ENCODE measurements at regions of chr20 and their contacts with region 1.

Region 1: GRCh38 chr20:20083807-20084206 is 31.5 kb downstream of the CFAP61 start:
- DNase-seq: peak; percentile 19
- ATAC-seq: peak; percentile 81
- H3K4me3 ChIP-seq: no peak overlapping the region
- H3K27ac ChIP-seq: no peak overlapping the region
- H3K4me1 ChIP-seq: no peaks in the 10 kb centered on the region
- H3K27me3 ChIP-seq: peaks cover 11% of the 10 kb centered on the region; the same call in 1 of the 2 replicates
- CTCF ChIP-seq: peak; percentile 29 to 60 (median 46); a peak in 4 of 6 replicates
- POLR2A ChIP-seq: no peak
- RAD21 ChIP-seq: peak; percentile 71

Region 2: GRCh38 chr20:20237093-20237959 is 153.5 kb after region 1 on chr20:
- CTCF ChIA-PET with region 1: interaction called, 6 read pairs
- POLR2A ChIA-PET with region 1: no interaction called
- RAD21 ChIA-PET with region 1: no interaction called
- intact Hi-C with region 1: loop called (anchors 1 kb)
- DNase-seq: peak; percentile 28
- ATAC-seq: peak; percentile 96
- H3K4me3 ChIP-seq: no peak overlapping the region
- H3K27ac ChIP-seq: no peak overlapping the region
- H3K4me1 ChIP-seq: no peaks in the 10 kb centered on the region
- H3K27me3 ChIP-seq: no peaks in the 10 kb centered on the region
- CTCF ChIP-seq: peak; percentile 27 to 80 (median 77); a peak in 5 of 6 replicates
- POLR2A ChIP-seq: no peak
- RAD21 ChIP-seq: peak; percentile 54

Region 3: DNA sequence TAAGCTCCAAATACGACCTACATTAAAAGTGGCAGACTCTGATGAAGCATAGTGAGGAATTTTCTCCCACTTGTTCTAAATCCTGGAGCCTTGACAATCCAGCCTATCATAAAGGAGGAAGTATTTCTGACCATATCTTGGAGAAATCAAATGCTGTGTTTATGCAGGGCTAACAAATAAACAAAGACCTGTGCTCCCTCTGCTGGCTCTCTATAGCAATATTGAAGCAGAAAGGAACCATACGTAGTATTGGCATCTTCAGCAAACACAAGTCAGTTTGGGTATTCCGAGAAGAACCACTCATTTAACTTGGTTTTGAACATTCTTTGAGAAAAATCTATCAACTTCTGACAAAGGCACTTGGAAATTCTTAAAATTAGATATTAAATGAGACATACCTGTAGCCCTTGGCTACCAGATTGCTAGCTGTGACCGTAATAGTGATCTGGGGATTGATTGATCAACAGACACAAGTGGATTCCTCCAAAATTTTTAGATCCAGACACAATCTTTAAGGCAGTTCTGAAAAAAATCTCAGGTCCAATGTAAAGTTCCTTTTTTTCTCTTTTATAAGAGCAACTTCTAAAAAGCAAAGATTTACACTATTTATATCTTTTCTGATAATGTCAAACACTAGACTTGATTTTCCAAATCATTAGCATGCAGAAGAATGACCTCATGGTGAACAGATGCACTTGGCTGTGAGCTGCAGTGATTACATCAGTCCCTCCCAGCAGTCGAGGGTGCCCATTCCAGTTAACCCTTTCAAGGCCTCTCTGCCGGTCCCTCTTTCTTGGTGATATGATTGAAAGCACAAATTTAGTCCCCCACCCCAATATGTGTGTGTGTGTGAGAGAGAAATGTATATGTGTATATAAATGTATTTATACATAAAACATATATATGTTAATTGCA is 324.3 kb after region 1 on chr20:
- CTCF ChIA-PET with region 1: no interaction called
- POLR2A ChIA-PET with region 1: no interaction called
- RAD21 ChIA-PET with region 1: no interaction called
- intact Hi-C with region 1: loop called (anchors 2 kb)
- DNase-seq: peak; percentile 3
- ATAC-seq: no peak
- H3K4me3 ChIP-seq: no peak overlapping the region
- H3K27ac ChIP-seq: no peak overlapping the region
- H3K4me1 ChIP-seq: no peaks in the 10 kb centered on the region
- H3K27me3 ChIP-seq: no peaks in the 10 kb centered on the region
- CTCF ChIP-seq: peak in 2 of 3 experiments; percentile 33 to 46; a peak in 4 of 6 replicates
- POLR2A ChIP-seq: no peak
- RAD21 ChIP-seq: no peak

Region 4: DNA sequence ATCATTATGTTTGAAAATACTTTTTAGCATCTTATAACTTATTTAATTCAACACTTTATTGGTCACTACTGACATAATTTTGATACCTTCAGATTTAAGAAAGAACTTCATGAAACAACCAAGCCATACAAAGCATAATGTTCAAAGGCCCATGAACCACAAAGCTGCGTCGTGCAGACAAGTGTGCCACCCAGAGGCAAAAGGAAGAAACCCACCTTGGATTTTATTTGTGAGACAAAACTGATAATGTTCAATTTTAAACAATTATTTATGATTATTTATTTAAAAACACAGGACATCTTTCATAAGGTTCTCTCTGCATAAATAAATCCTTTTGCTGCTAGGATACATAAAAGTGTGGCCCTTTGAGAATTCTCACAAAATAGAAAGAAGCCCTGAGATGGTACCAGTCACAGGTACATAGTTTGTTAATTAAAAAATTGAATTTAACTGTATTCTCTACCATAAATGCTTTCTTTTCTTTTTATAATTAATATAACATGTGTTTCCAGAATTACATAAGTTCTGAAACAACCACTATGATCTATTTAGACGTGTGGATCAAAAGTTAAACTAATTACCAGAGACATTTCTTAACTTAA is 484.9 kb after region 1 on chr20:
- CTCF ChIA-PET with region 1: no interaction called
- POLR2A ChIA-PET with region 1: no interaction called
- RAD21 ChIA-PET with region 1: no interaction called
- intact Hi-C with region 1: loop called (anchors 1 kb)
- DNase-seq: no peak
- ATAC-seq: no peak
- H3K4me3 ChIP-seq: no peak overlapping the region
- H3K27ac ChIP-seq: no peak overlapping the region
- H3K4me1 ChIP-seq: no peaks in the 10 kb centered on the region
- H3K27me3 ChIP-seq: no peaks in the 10 kb centered on the region
- CTCF ChIP-seq: peak; percentile 61 to 75 (median 69)
- POLR2A ChIP-seq: no peak
- RAD21 ChIP-seq: peak; percentile 81

Region 5: GRCh38 chr20:20593447-20594170 is 509.8 kb after region 1 on chr20:
- CTCF ChIA-PET with region 1: interaction called, 12 read pairs
- POLR2A ChIA-PET with region 1: no interaction called
- RAD21 ChIA-PET with region 1: no interaction called
- intact Hi-C with region 1: loop called (anchors 2 kb)
- DNase-seq: peak; percentile 18
- ATAC-seq: peak; percentile 80
- H3K4me3 ChIP-seq: no peak overlapping the region
- H3K27ac ChIP-seq: no peak overlapping the region
- H3K4me1 ChIP-seq: no peaks in the 10 kb centered on the region
- H3K27me3 ChIP-seq: no peaks in the 10 kb centered on the region
- CTCF ChIP-seq: peak in 2 of 3 experiments; percentile 74 to 77
- POLR2A ChIP-seq: no peak
- RAD21 ChIP-seq: peak; percentile 35; the same call in 1 of the 2 replicates

Region 6: GRCh38 chr20:20824924-20825584 is 741.2 kb after region 1 on chr20:
- CTCF ChIA-PET with region 1: no interaction called
- POLR2A ChIA-PET with region 1: no interaction called
- RAD21 ChIA-PET with region 1: no interaction called
- intact Hi-C with region 1: loop called (anchors 5 kb)
- DNase-seq: no peak
- ATAC-seq: peak; percentile 80
- H3K4me3 ChIP-seq: no peak overlapping the region
- H3K27ac ChIP-seq: no peak overlapping the region
- H3K4me1 ChIP-seq: 0 out of 4 replicates have a peak, but pooled peaks cover 0 to 5% of the 10 kb centered on the region in 2 experiments
- H3K27me3 ChIP-seq: peaks cover 10% of the 10 kb centered on the region; the same call in 1 of the 2 replicates
- CTCF ChIP-seq: peak; percentile 59 to 83 (median 78); a peak in 5 of 6 replicates
- POLR2A ChIP-seq: no peak
- RAD21 ChIP-seq: peak; percentile 65

Measured in HCT116 (cell line).